Sigmoid colon (tissue), 7 donors: ENCODE measurements at regions of chr10 and their contacts with region 1.

Region 1: GRCh38 chr10:49518982-49519578 is 19.8 kb downstream of the ERCC6 start:
- DNase-seq: no peak
- H3K4me3 ChIP-seq: no peak overlapping the region
- H3K27ac ChIP-seq: no peak overlapping the region
- H3K4me1 ChIP-seq: no peaks in the 10 kb centered on the region
- H3K27me3 ChIP-seq: no peaks in the 10 kb centered on the region
- CTCF ChIP-seq: peak in 3 of 4 experiments; percentile 35 to 61 (median 45)
- EP300 ChIP-seq: no peak
- POLR2A ChIP-seq: no peak

Region 2: DNA sequence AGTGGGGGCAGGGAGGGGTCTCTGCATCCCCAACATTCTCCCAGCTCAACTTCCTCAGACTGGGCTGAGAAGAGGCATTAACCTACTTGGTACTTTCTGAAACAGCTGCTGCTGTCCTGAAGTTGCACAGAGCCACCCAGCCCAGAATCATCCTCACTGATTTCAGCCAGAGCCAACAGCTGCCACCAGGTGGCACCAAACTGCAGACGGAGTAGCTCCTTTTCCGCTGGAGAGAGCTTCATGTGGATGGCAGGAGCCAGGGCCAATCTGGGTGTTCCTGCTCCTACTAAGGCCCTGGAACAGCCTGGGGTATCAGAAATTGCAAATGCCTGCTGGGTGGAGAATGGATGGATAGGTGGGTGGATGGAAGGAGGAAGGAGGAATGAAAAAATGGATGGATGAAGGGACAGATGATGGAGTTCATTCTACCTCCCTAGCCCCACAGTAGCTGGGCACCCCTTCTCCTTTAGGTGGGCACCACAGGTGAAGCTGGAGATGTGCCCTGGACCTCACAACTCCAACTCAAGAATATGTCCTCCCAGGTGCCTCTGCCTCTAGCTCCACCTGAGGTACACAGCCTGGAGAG is 111.4 kb before region 1 on chr10:
- intact Hi-C with region 1: loop called (anchors 2 kb)
- DNase-seq: no peak
- H3K4me3 ChIP-seq: no peak overlapping the region
- H3K27ac ChIP-seq: no peak overlapping the region
- H3K4me1 ChIP-seq: peaks cover 0 to 7% (median 2%) of the 10 kb centered on the region in 4 donors
- H3K27me3 ChIP-seq: peaks cover 0 to 36% (median 9%) of the 10 kb centered on the region in 3 donors
- CTCF ChIP-seq: peak in 3 of 4 experiments; percentile 63 to 77 (median 66)
- EP300 ChIP-seq: no peak
- POLR2A ChIP-seq: no peak